HepG2 (cell line): ENCODE measurements at regions of chr12 and their contacts with region 1.

Region 1: DNA sequence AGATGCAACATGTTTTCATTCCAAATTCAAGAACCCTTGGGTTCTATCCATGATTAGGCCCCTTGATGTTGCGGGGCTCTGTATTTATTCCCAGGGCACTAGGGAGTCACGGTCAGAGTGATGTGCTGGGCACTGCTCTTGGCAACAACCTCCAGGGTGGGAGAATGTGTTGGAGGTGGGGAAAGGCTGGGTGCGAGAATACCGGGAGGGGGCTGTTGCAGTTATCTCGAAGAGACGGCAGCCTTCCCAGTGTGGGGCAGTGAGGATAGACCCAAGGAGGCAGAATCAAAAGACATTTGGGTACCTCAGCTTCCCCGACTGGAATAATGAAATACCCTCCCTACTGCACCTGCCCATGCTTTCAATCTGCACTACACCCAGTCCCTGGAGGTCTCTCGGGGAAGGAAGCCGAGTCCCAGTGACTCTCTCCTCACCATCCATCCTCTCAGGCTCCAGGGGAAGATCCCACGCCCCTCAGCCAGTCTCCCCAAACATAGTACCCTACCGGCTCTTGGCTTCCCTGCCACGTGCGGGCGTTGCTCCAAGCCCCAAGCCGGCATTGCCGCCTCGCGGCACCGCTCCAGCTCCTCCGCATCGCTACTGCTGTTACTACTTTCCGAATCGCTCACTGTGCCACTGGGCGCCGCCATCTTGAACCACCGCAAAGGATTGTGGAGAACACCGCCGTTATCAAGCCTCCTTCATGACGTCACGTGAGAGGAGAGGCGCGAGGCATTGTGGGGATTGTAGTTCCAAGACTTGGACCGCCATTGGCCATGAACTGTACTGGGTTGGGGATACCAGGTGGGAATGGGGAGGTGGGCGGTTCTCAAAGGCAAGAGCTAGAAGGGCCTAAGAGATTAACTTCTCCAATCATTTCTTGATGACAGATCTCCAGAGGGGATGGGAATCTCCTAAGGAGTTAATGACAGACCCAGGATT is at the start of gene C12orf43:
- DNase-seq: peak; percentile 91
- ATAC-seq: peak; percentile 93
- H3K4me3 ChIP-seq: peak within 1 kb of the TSS; percentile 71 to 92 (median 81)
- H3K27ac ChIP-seq: peak within 1 kb of the TSS; percentile 63
- H3K4me1 ChIP-seq: peaks cover 43% of the 10 kb centered on the region
- H3K27me3 ChIP-seq: no peaks in the 10 kb centered on the region; a peak in 1 of 5 replicates
- CTCF ChIP-seq: peak; percentile 14; the same call in 1 of the 2 replicates
- EP300 ChIP-seq: no peak
- POLR2A ChIP-seq: peak; percentile 75 to 86
- RAD21 ChIP-seq: no peak; the same call in 1 of the 2 replicates
- total RNA-seq, gene C12orf43: 11.1 and 12.9 TPM in 2 replicates

Region 2: GRCh38 chr12:121026274-121027045 is 10.4 kb after region 1 on chr12:
- CTCF ChIA-PET with region 1: no interaction called
- POLR2A ChIA-PET with region 1: interaction called, 14 read pairs
- in situ Hi-C with region 1: no loop called
- intact Hi-C with region 1: no loop called
- DNase-seq: peak; percentile 91
- ATAC-seq: peak; percentile 87
- H3K4me3 ChIP-seq: peak overlapping the region in 1 of 3 experiments; percentile 54; a peak in 2 of 6 replicates
- H3K27ac ChIP-seq: peak overlapping the region; percentile 89
- H3K4me1 ChIP-seq: peaks cover 65% of the 10 kb centered on the region
- H3K27me3 ChIP-seq: peaks cover 0 to 3% of the 10 kb centered on the region in 2 experiments; a peak in 1 of 5 replicates
- CTCF ChIP-seq: peak; percentile 73
- EP300 ChIP-seq: no peak
- POLR2A ChIP-seq: no peak
- RAD21 ChIP-seq: peak; percentile 23; the same call in 1 of the 2 replicates

Region 3: DNA sequence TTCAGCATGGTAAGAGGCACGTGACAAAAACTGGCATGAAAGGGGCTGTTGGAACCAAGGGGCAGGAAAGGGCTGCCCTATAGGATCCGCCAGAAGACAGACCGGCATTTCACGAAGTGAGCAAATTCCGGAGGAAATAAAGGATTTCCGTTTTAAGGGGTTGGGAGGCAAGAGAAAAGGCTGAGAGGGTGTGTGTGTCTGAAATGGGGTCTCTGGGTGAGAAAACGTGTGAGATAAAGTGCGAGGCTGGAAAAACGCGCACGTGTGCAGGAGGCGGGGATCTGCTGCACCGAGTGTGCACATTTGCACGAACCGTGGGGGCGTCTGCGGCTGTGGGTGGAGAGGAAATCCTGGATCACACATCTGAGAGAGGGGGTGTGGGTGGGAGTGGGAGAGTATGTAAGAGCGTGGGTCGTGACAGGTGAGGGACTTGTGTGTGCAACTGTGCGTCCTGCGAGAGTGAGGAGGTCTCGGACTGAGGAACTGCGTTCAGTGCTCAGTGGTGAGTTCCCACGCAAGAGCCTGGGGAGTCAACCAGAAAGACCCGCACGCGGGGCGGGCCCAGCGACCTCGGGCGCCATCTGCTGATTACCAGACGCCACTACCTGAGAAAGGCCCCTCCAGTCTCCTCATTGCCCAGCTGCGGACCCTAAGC is 79.6 kb after region 1 on chr12:
- CTCF ChIA-PET with region 1: no interaction called
- POLR2A ChIA-PET with region 1: no interaction called
- in situ Hi-C with region 1: loop called (anchors 5 kb)
- intact Hi-C with region 1: no loop called
- DNase-seq: peak; percentile 25
- ATAC-seq: peak; percentile 96
- H3K4me3 ChIP-seq: peak overlapping the region in 1 of 3 experiments; percentile 61; a peak in 3 of 6 replicates
- H3K27ac ChIP-seq: no peak overlapping the region
- H3K4me1 ChIP-seq: peaks cover 11% of the 10 kb centered on the region
- H3K27me3 ChIP-seq: peaks cover 2 to 15% of the 10 kb centered on the region in 2 experiments; a peak in 4 of 5 replicates
- CTCF ChIP-seq: peak; percentile 92
- EP300 ChIP-seq: no peak
- POLR2A ChIP-seq: no peak
- RAD21 ChIP-seq: peak; percentile 87